Right lobe of liver (tissue), 6 donors: ENCODE measurements at regions of chr17 and their contacts with region 1.

Region 1: DNA sequence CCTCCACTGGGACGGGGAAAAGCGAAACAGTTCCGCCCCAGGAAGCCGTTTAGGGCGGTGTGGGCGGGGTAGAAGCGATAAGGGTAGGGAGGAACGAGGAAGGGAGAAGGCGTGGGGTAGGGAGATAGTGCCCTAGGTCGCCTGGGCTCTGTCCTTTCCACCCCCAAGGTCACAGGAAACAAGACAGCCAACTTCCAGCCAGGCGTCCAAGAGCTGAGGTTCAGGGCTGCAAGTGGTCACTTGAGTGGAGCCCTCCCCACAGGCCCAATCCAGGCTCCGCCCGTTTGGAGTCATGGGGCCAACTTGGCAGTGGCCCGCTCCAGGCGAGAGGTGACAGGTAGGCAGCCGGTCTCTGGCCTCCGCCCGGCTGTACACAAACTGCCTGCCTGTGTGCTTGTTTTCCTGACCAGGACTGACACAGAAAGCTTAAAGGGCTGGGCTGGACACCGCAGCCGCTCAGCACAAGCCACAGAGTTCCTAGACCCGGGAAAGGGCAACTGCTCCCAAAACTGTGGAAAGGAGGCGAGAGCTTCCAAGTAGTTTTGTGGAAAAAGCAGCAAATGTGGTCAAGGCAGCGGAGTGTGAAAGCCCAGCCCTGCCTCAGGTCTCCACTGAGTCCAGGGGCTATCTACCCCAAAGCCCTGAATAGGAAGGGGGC is at the start of gene RILP:
- DNase-seq: peak; percentile 94 to 98 (median 98)
- ATAC-seq: peak; percentile 69 to 80 (median 74)
- H3K4me3 ChIP-seq: peak within 1 kb of the TSS; percentile 81 to 98 (median 88)
- H3K27ac ChIP-seq: peak within 1 kb of the TSS; percentile 87 to 96 (median 92)
- H3K4me1 ChIP-seq: peaks cover 0 to 26% (median 16%) of the 10 kb centered on the region in 4 donors
- H3K27me3 ChIP-seq: no peaks in the 10 kb centered on the region
- CTCF ChIP-seq: no peak
- POLR2A ChIP-seq: peak; percentile 51
- total RNA-seq, gene RILP: 14.6 to 47.3 (median 23.9) TPM

Region 2: DNA sequence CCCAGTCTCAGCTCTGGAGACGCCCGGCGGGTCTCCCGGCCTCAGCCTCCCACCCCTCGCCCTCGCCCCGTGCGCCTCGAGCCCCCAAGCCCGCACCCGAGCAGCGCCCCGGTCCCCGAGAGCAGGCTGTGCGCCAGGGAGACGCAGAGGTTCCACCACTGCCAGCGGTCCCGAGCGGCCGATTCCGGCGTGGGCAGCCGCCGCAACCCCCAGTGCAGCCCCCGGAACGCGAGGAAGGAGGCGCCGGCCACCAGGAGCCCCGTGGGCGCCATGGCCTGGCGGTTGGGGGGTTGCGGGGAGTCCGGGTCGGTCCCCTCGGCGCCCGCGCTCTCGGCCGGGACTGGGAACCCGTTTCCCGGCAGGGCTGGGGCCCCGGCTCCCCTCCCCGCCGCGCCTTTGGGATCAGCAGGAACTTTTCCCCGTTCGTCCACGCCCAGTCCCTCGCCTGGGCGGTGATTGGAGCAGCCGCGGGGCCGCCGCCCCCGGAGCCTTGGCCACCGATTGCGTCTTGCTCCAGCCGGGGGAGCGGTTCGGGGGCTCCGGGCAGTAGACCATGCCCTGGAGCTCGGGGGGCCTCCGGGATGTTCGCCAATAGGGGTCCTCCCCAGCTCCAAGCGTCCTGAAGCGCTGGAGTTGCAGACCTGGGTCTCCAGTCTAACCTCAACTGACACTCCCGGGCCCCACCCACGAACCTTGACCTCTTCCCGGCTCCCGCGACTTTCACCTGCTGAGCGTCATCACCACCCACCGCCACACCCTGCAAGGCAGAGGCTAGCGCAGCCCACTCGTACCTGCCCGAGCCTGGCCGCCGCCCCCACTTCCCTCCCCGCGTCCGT is 60.2 kb after region 1 on chr17 and contains the start of gene TLCD2:
- intact Hi-C with region 1: loop called in 1 of 2 experiments (anchors 10 kb)
- DNase-seq: peak; percentile 86 to 88 (median 88)
- ATAC-seq: peak; percentile 50 to 64 (median 58)
- H3K4me3 ChIP-seq: peak within 1 kb of the TSS; percentile 66 to 83 (median 67)
- H3K27ac ChIP-seq: peak within 1 kb of the TSS; percentile 10 to 88 (median 69)
- H3K4me1 ChIP-seq: peaks cover 0 to 16% (median 7%) of the 10 kb centered on the region in 4 donors
- H3K27me3 ChIP-seq: no peaks in the 10 kb centered on the region
- CTCF ChIP-seq: no peak
- POLR2A ChIP-seq: peak; percentile 77
- total RNA-seq, gene TLCD2: 2.5 to 17.7 (median 3.7) TPM